ENCODE measurements at regions of chr6 and their contacts with region 1.

Region 1: GRCh38 chr6:137811121-137811915 is 55.7 kb upstream of the TNFAIP3 start:
- DNase-seq: peak; percentile 78
- H3K4me3 Mint-ChIP-seq: peak overlapping the region; percentile 43
- H3K27ac Mint-ChIP-seq: peak overlapping the region; percentile 81
- H3K4me1 Mint-ChIP-seq: peaks cover 68% of the 10 kb centered on the region
- H3K27me3 Mint-ChIP-seq: no peaks in the 10 kb centered on the region

Region 2: GRCh38 chr6:136146130-136146529 is 1665.2 kb before region 1 on chr6:
- intact Hi-C with region 1: no loop called
- DNase-seq: no peak
- H3K4me3 Mint-ChIP-seq: no peak overlapping the region
- H3K27ac Mint-ChIP-seq: no peak overlapping the region
- H3K4me1 Mint-ChIP-seq: no peaks in the 10 kb centered on the region
- H3K27me3 Mint-ChIP-seq: peaks cover 1% of the 10 kb centered on the region

Region 3: DNA sequence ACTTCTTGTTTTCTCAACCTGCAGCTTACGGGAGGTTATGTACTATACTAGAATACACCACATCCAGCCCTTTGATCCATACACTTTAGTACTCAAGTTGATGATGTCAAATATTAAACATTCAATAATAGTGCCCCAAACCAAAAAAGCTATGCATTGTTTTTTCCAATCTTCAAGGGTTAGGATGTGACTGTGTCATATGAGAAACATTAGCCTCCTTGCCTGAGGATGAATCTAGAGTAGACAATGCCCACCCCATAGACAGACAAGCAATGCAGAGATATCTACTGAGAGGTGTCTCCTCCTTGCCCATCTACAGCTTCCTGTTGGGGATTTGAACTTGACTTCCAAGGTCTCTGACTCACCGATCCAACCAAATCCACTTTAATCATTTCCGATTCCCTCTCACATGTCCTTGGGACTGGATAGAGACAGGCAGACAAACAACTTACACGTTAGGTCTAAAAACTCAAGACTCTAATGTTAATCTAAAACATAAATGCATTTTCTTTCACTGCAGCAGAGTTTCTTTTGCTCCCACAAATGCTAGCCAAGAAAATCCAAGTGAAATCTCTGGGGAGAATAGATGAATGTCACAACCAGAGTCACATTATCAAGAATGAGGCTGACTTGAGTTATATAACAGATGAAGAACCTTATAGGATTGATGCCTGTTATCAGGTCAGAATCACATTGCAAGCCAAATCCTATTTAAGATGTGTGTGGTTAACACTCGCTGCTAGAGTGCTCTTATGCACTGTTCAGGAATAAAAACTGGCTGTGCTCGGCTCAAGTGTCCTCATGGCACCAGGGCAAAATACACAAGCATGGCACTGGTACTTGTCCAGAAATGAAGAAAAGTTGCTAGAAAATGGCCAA is 19.8 kb before region 1 on chr6:
- intact Hi-C with region 1: loop called (anchors 1 kb)
- DNase-seq: no peak
- H3K4me3 Mint-ChIP-seq: peak overlapping the region; percentile 59
- H3K27ac Mint-ChIP-seq: peak overlapping the region; percentile 87
- H3K4me1 Mint-ChIP-seq: peaks cover 76% of the 10 kb centered on the region
- H3K27me3 Mint-ChIP-seq: no peaks in the 10 kb centered on the region

Region 4: GRCh38 chr6:137799950-137800568 is 11.3 kb before region 1 on chr6:
- intact Hi-C with region 1: loop called (anchors 1 kb)
- DNase-seq: peak; percentile 35
- H3K4me3 Mint-ChIP-seq: no peak overlapping the region
- H3K27ac Mint-ChIP-seq: peak overlapping the region; percentile 14
- H3K4me1 Mint-ChIP-seq: peaks cover 67% of the 10 kb centered on the region
- H3K27me3 Mint-ChIP-seq: no peaks in the 10 kb centered on the region

Region 5: DNA sequence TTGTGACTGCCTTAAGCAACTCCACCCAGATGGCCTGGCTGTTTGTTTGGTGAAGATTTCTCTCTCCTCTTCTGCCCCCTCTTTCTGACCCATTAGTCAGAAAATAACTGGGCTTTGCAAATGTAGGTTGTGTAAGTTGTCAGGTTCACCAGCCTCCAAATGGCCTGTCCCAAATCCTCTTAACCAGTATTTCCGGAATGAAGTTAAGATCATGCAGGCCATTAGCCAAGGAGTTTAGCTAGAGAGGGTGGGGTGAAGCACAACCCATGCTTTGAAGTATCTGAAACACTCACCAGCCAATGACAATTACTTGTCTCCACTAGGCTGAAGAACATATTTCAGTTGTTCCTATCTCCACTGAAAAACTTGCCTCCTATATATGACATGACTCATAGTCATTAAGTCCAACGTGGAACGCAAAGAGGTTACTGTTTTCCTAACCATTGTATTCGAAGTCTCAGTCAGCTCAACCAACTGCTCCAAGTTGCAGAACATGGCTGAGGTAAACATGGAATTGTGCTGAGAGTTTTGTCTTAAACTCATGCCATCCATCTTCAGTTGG is 18.3 kb after region 1 on chr6:
- intact Hi-C with region 1: loop called (anchors 1 kb)
- DNase-seq: no peak
- H3K4me3 Mint-ChIP-seq: peak overlapping the region; percentile 69
- H3K27ac Mint-ChIP-seq: peak overlapping the region; percentile 96
- H3K4me1 Mint-ChIP-seq: peaks cover 64% of the 10 kb centered on the region
- H3K27me3 Mint-ChIP-seq: no peaks in the 10 kb centered on the region